ENCODE measurements at regions of chr21 and their contacts with region 1.

Region 1: DNA sequence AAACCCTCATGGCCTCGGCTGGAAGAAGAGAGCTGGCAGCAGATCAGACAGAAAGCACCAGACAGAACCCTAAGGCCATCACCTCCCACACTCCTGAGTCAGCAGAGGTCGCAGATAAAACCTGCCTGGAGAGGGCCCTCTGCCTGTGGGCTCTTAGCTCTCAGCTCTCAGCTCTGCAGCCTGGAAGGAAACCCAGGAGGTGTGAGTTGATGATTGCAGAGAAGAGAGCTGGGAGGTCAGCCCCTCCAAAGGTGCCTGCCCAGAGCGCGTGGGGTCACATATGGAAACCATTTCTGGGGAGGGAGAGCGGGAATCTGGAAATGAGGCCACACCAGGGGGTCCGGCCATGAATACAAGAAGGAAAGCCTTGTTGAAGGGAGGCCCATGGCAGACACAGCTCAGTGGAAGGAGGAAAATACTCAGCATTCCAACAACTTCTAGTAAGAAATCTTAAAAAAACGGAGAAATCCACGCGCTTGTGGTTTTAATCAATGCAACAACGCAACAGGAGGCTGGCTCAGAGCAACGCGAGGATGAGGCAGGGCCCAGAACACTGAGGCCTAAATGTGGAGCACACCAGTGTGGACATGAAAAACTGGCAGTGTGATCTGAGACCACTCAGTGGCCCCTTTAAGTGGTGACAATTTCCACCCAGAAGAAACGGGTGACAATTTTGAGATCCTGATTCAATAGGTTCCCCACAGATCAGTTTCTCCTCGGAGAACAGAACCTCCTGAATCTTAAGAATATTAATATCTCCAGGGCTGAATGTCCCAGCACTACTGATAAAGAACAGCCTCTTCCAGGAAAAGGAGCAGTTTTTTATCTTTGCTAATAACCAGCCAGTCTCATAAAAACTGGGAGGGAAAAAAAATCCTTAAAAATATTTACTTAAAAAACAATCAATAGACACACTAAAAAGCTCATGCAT is 45.7 kb downstream of the PSMG1 start:
- DNase-seq: no peak
- ATAC-seq: no peak
- H3K4me3 ChIP-seq: no peak overlapping the region
- H3K27ac ChIP-seq: no peak overlapping the region
- H3K4me1 ChIP-seq: peaks cover 7 to 11% of the 10 kb centered on the region in 2 experiments; a peak in 2 of 4 replicates
- H3K27me3 ChIP-seq: no peaks in the 10 kb centered on the region
- CTCF ChIP-seq: no peak
- POLR2A ChIP-seq: no peak
- RAD21 ChIP-seq: no peak

Region 2: GRCh38 chr21:38505654-38506515 is 631.6 kb before region 1 on chr21:
- CTCF ChIA-PET with region 1: interaction called, 6 read pairs
- POLR2A ChIA-PET with region 1: no interaction called
- RAD21 ChIA-PET with region 1: no interaction called
- intact Hi-C with region 1: loop called (anchors 1 kb)
- DNase-seq: peak; percentile 42
- ATAC-seq: peak; percentile 86
- H3K4me3 ChIP-seq: no peak overlapping the region
- H3K27ac ChIP-seq: no peak overlapping the region
- H3K4me1 ChIP-seq: no peaks in the 10 kb centered on the region
- H3K27me3 ChIP-seq: peaks cover 8% of the 10 kb centered on the region; the same call in 1 of the 2 replicates
- CTCF ChIP-seq: peak; percentile 52 to 69 (median 67); a peak in 5 of 6 replicates
- POLR2A ChIP-seq: no peak
- RAD21 ChIP-seq: peak; percentile 64

Region 3: GRCh38 chr21:38669176-38669575 is 468.3 kb before region 1 on chr21:
- CTCF ChIA-PET with region 1: interaction called, 7 read pairs
- POLR2A ChIA-PET with region 1: no interaction called
- RAD21 ChIA-PET with region 1: interaction called in 1 of 2 experiments, 7 read pairs
- intact Hi-C with region 1: loop called (anchors 1 kb)
- DNase-seq: no peak
- ATAC-seq: peak; percentile 94
- H3K4me3 ChIP-seq: no peak overlapping the region
- H3K27ac ChIP-seq: no peak overlapping the region
- H3K4me1 ChIP-seq: no peaks in the 10 kb centered on the region
- H3K27me3 ChIP-seq: no peaks in the 10 kb centered on the region
- CTCF ChIP-seq: peak; percentile 34 to 64 (median 57); a peak in 5 of 6 replicates
- POLR2A ChIP-seq: no peak
- RAD21 ChIP-seq: peak; percentile 50; the same call in 1 of the 2 replicates

Region 4: GRCh38 chr21:38805328-38806152 is 332.0 kb before region 1 on chr21 and contains the start of gene ETS2:
- CTCF ChIA-PET with region 1: interaction called, 3 read pairs
- POLR2A ChIA-PET with region 1: no interaction called
- RAD21 ChIA-PET with region 1: no interaction called
- intact Hi-C with region 1: loop called (anchors 1 kb)
- DNase-seq: peak; percentile 87
- ATAC-seq: peak; percentile 84
- H3K4me3 ChIP-seq: peak within 1 kb of the TSS; percentile 81
- H3K27ac ChIP-seq: peak within 1 kb of the TSS; percentile 80
- H3K4me1 ChIP-seq: peaks cover 13 to 37% of the 10 kb centered on the region in 2 experiments; a peak in 3 of 4 replicates
- H3K27me3 ChIP-seq: no peaks in the 10 kb centered on the region
- CTCF ChIP-seq: no peak
- POLR2A ChIP-seq: peak; percentile 83
- RAD21 ChIP-seq: no peak
- total RNA-seq, gene ETS2: 32.9 TPM

Measured in HCT116 (cell line).